MCF 10A (cell line): ENCODE measurements at regions of chr2 and their contacts with region 1.

Region 1: GRCh38 chr2:27409321-27410073 is at the start of gene PPM1G:
- DNase-seq: peak; percentile 91
- H3K4me3 Mint-ChIP-seq: peak within 1 kb of the TSS; percentile 77
- H3K27ac Mint-ChIP-seq: peak within 1 kb of the TSS; percentile 78
- H3K4me1 Mint-ChIP-seq: peaks cover 15% of the 10 kb centered on the region
- H3K27me3 Mint-ChIP-seq: no peaks in the 10 kb centered on the region
- CTCF ChIP-seq: no peak
- total RNA-seq, gene PPM1G: 85.7 and 123 TPM in 2 replicates

Region 2: GRCh38 chr2:27356382-27357181 is 52.9 kb before region 1 on chr2 and contains the start of gene GTF3C2:
- CTCF ChIA-PET with region 1: no interaction called
- POLR2A ChIA-PET with region 1: interaction called, 21 read pairs
- intact Hi-C with region 1: no loop called
- DNase-seq: peak; percentile 97
- H3K4me3 Mint-ChIP-seq: peak within 1 kb of the TSS; percentile 90
- H3K27ac Mint-ChIP-seq: peak within 1 kb of the TSS; percentile 93
- H3K4me1 Mint-ChIP-seq: peaks cover 31% of the 10 kb centered on the region
- H3K27me3 Mint-ChIP-seq: no peaks in the 10 kb centered on the region
- CTCF ChIP-seq: no peak
- total RNA-seq, gene GTF3C2: 47.5 and 47.8 TPM in 2 replicates

Region 3: GRCh38 chr2:27380626-27381545 is 28.6 kb before region 1 on chr2 and contains the start of gene ZNF513:
- CTCF ChIA-PET with region 1: no interaction called
- POLR2A ChIA-PET with region 1: interaction called, 38 read pairs
- intact Hi-C with region 1: no loop called
- DNase-seq: peak; percentile 95
- H3K4me3 Mint-ChIP-seq: peak within 1 kb of the TSS; percentile 84
- H3K27ac Mint-ChIP-seq: peak within 1 kb of the TSS; percentile 93
- H3K4me1 Mint-ChIP-seq: peaks cover 20% of the 10 kb centered on the region
- H3K27me3 Mint-ChIP-seq: no peaks in the 10 kb centered on the region
- CTCF ChIP-seq: no peak
- total RNA-seq, gene ZNF513: 14.8 and 16.2 TPM in 2 replicates

Region 4: GRCh38 chr2:27428213-27428977 is 18.9 kb after region 1 on chr2 and contains the start of gene NRBP1:
- CTCF ChIA-PET with region 1: interaction called, 22 read pairs
- POLR2A ChIA-PET with region 1: interaction called, 205 read pairs
- intact Hi-C with region 1: loop called (anchors 1 kb)
- DNase-seq: peak; percentile 87
- H3K4me3 Mint-ChIP-seq: peak within 1 kb of the TSS; percentile 94
- H3K27ac Mint-ChIP-seq: peak within 1 kb of the TSS; percentile 94
- H3K4me1 Mint-ChIP-seq: peaks cover 15% of the 10 kb centered on the region
- H3K27me3 Mint-ChIP-seq: no peaks in the 10 kb centered on the region
- CTCF ChIP-seq: no peak
- total RNA-seq, gene NRBP1: 79.5 and 97.3 TPM in 2 replicates

Region 5: DNA sequence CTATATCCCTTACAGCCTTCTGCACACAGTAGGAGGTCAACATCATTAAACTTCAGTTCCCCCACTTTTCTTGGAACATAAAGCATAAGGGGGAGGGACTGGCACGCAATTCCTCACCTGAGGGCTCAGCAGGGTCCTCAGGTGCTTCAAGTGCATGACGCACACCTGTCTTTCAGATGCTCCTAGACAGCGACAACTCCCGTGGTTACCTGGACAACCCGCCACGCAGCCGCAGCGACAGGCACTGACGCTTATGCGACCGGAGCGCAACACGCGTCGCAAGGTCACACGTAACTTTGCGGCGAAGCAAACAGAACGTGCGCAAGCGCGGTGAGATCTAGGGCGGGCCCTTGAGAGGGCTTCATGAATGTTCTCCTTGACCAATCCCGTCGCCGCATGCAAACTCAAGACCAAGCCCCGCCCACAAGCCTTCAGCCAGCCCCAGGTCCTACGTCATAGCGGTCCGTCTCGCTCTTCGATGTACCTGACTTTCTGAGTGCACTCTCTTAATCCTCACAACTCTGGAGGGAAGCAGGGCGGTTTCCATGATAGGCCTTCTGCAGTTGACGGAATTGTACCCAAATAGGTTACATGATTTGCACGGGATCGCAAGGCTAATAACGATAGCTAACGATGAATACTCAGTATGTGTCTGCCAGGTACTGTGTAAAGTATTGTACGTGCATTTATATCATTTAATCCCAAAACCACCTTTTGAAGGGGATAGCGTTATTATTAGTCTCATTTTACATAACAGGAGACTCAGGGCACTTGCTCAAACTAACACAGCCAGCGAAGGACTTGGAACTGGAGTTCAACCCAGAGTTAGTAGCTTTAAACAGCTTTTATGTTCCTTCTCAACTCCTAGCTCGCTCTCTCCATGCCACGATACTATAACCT is 80.3 kb after region 1 on chr2 and contains the start of gene IFT172:
- CTCF ChIA-PET with region 1: interaction called, 5 read pairs
- POLR2A ChIA-PET with region 1: interaction called, 4 read pairs
- intact Hi-C with region 1: loop called (anchors 2 kb)
- DNase-seq: peak; percentile 99
- H3K4me3 Mint-ChIP-seq: peak within 1 kb of the TSS; percentile 92
- H3K27ac Mint-ChIP-seq: peak within 1 kb of the TSS; percentile 87
- H3K4me1 Mint-ChIP-seq: peaks cover 6% of the 10 kb centered on the region
- H3K27me3 Mint-ChIP-seq: no peaks in the 10 kb centered on the region
- CTCF ChIP-seq: no peak
- total RNA-seq, gene IFT172: 20.6 and 22.3 TPM in 2 replicates

Region 6: GRCh38 chr2:27545348-27546141 is 136.0 kb after region 1 on chr2:
- CTCF ChIA-PET with region 1: no interaction called
- POLR2A ChIA-PET with region 1: no interaction called
- intact Hi-C with region 1: no loop called
- DNase-seq: no peak
- H3K4me3 Mint-ChIP-seq: no peak overlapping the region
- H3K27ac Mint-ChIP-seq: no peak overlapping the region
- H3K4me1 Mint-ChIP-seq: no peaks in the 10 kb centered on the region
- H3K27me3 Mint-ChIP-seq: no peaks in the 10 kb centered on the region
- CTCF ChIP-seq: no peak

Region 7: GRCh38 chr2:27663463-27664249 is 254.2 kb after region 1 on chr2 and contains the starts of genes SLC4A1AP and SUPT7L:
- CTCF ChIA-PET with region 1: no interaction called
- POLR2A ChIA-PET with region 1: interaction called, 17 read pairs
- intact Hi-C with region 1: no loop called
- DNase-seq: peak; percentile 83
- H3K4me3 Mint-ChIP-seq: peak within 1 kb of the TSS; percentile 92
- H3K27ac Mint-ChIP-seq: peak within 1 kb of the TSS; percentile 95
- H3K4me1 Mint-ChIP-seq: peaks cover 29% of the 10 kb centered on the region
- H3K27me3 Mint-ChIP-seq: no peaks in the 10 kb centered on the region
- CTCF ChIP-seq: no peak
- total RNA-seq, gene SLC4A1AP: 24.3 and 27.2 TPM in 2 replicates
- total RNA-seq, gene SUPT7L: 36.4 and 40.8 TPM in 2 replicates